ENCODE measurements at regions of chr10 and their contacts with region 1.

Region 1: DNA sequence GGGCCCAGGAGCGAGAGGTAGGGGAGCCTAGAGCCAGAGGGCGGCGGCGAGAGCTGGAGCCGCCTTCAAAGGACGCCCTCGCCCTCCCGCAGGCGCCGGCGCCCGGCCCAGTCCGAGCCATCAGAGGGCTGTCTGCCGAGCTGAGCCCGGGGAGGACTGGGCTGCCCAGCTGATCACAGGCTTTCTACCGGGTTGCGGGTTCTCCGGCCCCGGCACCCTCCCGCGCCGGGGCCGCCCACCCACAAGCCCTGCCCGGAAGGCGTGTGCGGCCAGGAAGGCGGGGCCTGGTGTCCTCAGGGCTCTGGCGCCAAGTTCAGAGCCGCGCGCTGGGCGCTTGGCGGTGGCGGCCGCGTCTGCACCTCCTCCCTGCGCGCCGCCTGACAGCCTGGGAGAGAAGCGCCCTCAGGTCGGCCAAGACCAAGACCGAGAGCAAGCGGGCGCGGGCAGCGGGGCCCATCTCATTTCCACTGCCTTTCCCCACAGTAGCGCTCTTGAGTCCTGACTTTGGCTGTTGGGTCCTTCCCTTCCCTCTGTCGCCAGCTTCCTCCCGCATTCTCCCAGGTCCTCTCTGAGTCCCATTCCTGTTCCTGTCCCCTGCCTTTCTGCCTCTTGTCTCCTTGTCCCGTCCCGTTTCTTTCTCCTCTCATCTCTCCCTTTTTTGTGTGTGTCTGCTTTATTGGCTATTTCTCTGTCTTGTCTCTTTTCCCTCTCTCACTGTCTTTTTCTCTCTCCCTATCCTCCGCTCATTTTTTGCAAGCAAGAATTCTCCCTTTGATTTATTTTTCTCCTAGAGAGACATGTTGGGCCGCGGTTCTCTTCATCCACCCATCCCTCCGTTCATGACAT is 60.6 kb upstream of the MSMB start:
- DNase-seq: peak; percentile 91
- H3K4me3 ChIP-seq: peak overlapping the region; percentile 57 to 70 (median 60)
- H3K27ac ChIP-seq: peak overlapping the region in 2 of 4 donors; percentile 30 to 35
- H3K4me1 ChIP-seq: peaks cover 8 to 18% (median 11%) of the 10 kb centered on the region in 4 donors
- H3K27me3 ChIP-seq: no peaks in the 10 kb centered on the region
- CTCF ChIP-seq: peak in 2 of 3 experiments; percentile 8 to 19
- EP300 ChIP-seq: no peak
- POLR2A ChIP-seq: no peak

Region 2: GRCh38 chr10:44186150-44186549 is 1920.5 kb before region 1 on chr10:
- intact Hi-C with region 1: no loop called
- DNase-seq: peak; percentile 91
- H3K4me3 ChIP-seq: no peak overlapping the region
- H3K27ac ChIP-seq: no peak overlapping the region
- H3K4me1 ChIP-seq: peaks cover 0 to 13% (median under 1%) of the 10 kb centered on the region in 4 donors
- H3K27me3 ChIP-seq: no peaks in the 10 kb centered on the region
- CTCF ChIP-seq: no peak
- EP300 ChIP-seq: no peak
- POLR2A ChIP-seq: no peak

Region 3: DNA sequence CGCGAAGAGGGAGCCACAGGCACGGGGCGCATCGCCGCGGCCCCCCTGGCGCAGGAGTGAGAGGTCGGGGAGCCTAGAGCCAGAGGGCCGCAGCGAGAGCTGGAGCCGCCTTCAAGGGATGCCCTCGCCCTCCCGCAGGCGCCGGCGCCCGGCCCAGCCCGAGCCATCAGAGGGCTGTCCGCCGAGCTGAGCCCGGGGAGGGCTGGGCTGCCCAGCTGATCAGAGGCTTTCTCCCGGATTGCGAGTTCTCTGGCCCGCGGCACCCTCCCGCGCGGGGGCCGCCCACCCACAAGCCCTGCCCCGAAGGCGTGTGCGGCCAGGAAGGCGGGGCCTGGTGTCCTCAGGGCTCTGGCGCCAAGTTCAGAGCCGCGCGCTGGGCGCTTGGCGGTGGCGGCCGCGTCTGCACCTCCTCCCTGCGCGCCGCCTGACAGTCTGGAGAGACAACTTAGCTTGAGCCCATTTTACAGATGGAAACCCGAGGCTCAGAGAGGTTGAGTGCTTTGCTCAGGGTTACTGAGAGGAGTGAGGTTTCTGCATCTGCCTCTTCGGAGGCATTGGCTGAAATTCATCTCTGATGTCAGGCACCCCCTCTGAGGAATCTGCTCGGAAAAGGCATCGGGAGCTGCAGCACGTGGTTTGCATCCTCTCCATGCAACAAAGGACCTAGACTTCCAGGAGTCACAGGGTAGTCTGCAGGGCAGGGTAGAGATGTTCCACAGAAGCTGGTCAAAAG is 176.4 kb after region 1 on chr10:
- intact Hi-C with region 1: loop called (anchors 2 kb)
- DNase-seq: no peak
- H3K4me3 ChIP-seq: peak overlapping the region; percentile 56 to 67 (median 60)
- H3K27ac ChIP-seq: peak overlapping the region; percentile 60 to 70 (median 69)
- H3K4me1 ChIP-seq: peaks cover 20 to 32% (median 29%) of the 10 kb centered on the region in 4 donors
- H3K27me3 ChIP-seq: no peaks in the 10 kb centered on the region
- CTCF ChIP-seq: peak in 2 of 3 experiments; percentile 24 to 33
- EP300 ChIP-seq: no peak
- POLR2A ChIP-seq: no peak